ENCODE measurements at regions of chr1 and their contacts with region 1.

Region 1: GRCh38 chr1:36516372-36517325 is 33.9 kb upstream of the CSF3R start:
- DNase-seq: peak in 9 of 10 donors; percentile 23 to 93 (median 50)

Region 2: DNA sequence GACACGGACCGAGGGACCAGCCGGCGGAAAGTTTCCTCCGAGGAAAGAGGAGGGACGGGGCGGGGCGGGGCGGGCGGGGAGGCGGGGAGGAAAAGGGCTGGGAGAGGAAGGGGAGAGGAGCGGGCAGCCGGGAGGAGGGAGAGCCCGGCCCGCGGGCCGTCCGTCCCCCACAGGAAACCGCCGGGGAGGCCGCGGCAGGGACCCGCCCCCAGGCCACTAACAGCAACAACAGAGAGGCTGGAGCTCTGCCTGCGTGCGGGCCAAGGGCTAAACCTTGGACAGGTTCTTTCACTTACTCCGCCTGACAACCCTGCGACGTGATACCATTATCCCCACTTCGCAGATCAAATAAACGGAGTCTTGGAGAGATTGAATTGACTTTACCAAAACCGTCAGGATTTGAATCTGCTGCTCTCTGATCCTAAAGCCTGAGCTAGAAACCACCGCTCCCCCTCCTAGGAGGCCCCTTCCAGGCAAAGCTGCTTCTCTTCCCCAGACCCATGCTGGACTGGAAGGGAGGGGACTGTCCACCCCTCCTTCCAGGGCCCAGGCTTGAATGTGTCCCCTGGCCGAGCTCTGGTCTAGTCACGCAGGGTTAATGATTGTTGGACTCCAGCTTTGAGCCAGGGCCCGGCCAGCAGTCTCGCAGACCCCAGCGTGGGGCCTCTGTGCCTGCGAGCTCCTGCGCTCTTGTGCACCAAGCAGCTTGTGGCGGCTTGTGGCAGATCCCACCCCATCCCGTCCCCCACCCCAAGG is 192.9 kb before region 1 on chr1 and contains the start of gene EVA1B:
- intact Hi-C with region 1: no loop called
- DNase-seq: peak in 4 of 10 donors; percentile 25 to 83 (median 58)

Region 3: DNA sequence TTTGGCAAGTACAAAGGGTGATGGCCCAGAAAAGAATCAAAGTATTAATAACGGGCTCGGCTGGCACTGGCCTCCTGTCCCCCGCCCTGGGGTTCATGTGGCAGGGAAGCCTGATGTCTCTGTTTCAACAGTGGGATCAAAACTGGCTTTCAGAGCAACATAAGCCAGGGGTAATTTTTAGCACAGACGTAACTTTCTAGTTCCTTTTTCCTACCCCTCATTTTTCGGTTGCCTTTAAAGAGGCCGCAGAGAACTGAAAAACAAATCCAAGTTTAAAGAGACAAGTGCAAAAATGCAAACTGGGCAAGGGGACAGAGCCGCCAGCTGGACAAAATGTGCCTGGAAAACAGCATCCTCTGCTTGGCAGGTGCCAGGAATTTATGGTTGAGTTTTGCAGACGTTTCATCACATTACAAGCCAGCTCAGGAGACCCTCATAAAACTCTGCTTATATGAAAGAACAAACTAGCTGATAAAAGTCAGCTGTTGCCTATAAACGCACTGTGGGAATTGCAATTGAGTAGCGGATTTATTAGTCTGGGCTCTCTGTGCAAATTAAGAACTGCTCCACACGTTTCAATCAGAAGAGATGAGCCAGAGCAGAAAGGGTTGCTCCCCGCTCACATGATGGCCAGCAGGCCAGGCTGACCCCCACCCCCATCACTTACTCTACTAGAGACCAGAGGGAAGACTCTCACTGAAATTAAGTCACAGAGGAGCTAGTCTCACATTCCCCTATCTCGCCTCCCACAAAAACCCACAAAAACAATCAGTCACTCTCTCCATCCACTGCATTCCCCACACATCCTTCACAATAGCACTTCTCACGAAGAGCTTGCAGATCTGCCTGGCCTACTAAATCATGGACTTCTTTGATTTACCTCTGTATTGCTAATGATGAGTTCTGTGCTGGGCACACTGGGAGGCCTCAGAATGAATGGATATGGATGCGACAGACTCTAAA is 1159.9 kb after region 1 on chr1:
- intact Hi-C with region 1: loop called (anchors 10 kb)
- DNase-seq: peak in 1 of 10 donors; percentile 42

Measured in posterior cingulate gyrus (tissue), 11 donors.